CD14-positive monocyte (primary cell): ENCODE measurements at regions of chr2 and their contacts with region 1.

Region 1: GRCh38 chr2:54522624-54523281 is 66.6 kb downstream of the SPTBN1 start:
- DNase-seq: peak; percentile 43 to 74 (median 66)
- H3K4me3 ChIP-seq: no peak overlapping the region
- H3K4me3 Mint-ChIP-seq: peak overlapping the region in 1 of 2 donors; percentile 39
- H3K27ac ChIP-seq: no peak overlapping the region
- H3K27ac Mint-ChIP-seq: no peak overlapping the region
- H3K4me1 ChIP-seq: peaks cover 6 to 7% of the 10 kb centered on the region in 2 donors
- H3K4me1 Mint-ChIP-seq: peaks cover 12% of the 10 kb centered on the region
- H3K27me3 ChIP-seq: no peaks in the 10 kb centered on the region
- H3K27me3 Mint-ChIP-seq: peaks cover 0 to 2% (median 0%) of the 10 kb centered on the region in 3 donors
- CTCF ChIP-seq: peak; percentile 76

Region 2: GRCh38 chr2:54479422-54479821 is 43.3 kb before region 1 on chr2:
- intact Hi-C with region 1: no loop called
- DNase-seq: no peak
- H3K4me3 ChIP-seq: no peak overlapping the region
- H3K4me3 Mint-ChIP-seq: no peak overlapping the region
- H3K27ac ChIP-seq: no peak overlapping the region
- H3K27ac Mint-ChIP-seq: no peak overlapping the region
- H3K4me1 ChIP-seq: no peaks in the 10 kb centered on the region
- H3K4me1 Mint-ChIP-seq: no peaks in the 10 kb centered on the region
- H3K27me3 ChIP-seq: no peaks in the 10 kb centered on the region
- H3K27me3 Mint-ChIP-seq: peaks cover 0 to 2% (median 1%) of the 10 kb centered on the region in 3 donors
- CTCF ChIP-seq: no peak

Region 3: DNA sequence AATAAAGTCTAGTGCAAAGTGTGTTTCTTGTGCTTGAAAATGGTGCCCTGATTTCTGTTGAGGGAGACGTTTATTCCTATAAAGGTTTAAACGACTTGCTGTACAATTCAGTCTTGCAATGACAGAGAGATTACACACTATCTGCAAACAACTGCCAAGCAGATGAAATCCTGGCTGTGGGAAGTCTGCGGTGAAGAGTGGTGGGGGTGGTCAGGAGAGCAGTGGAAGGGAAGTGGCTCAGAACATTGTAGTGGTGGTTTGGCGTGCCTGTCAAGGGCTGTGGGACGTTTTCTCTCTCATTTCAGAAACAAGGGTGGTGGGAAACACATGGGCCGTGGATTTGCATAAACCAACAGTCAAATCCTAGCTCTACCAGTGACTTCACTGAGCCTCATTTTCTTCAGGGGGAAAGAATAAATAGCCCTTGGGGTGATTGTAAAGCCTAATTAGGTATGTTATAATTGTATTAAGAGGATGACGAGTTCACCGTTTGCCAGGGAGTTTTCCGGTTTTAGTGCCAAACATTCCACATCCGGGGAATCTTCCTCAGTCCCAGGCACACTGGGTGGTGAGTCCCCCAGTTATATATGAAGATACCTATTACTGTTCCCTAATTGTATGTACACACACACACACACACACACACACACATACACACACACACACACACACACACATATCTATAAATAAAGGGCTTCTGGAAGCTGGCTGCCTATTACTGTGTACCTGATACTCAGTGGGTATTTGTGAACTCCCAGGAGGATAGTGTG is 48.4 kb after region 1 on chr2:
- intact Hi-C with region 1: loop called (anchors 5 to 10 kb)
- DNase-seq: peak; percentile 54 to 73 (median 54)
- H3K4me3 ChIP-seq: peak overlapping the region in 1 of 3 experiments; percentile 4
- H3K4me3 Mint-ChIP-seq: peak overlapping the region; percentile 47 to 68
- H3K27ac ChIP-seq: peak overlapping the region in 1 of 2 donors; percentile 39
- H3K27ac Mint-ChIP-seq: peak overlapping the region in 6 of 7 donors; percentile 52 to 90 (median 78)
- H3K4me1 ChIP-seq: peaks cover 58 to 73% of the 10 kb centered on the region in 2 donors
- H3K4me1 Mint-ChIP-seq: peaks cover 85% of the 10 kb centered on the region
- H3K27me3 ChIP-seq: no peaks in the 10 kb centered on the region
- H3K27me3 Mint-ChIP-seq: peaks cover 0 to 2% (median 0%) of the 10 kb centered on the region in 3 donors
- CTCF ChIP-seq: no peak

Region 4: DNA sequence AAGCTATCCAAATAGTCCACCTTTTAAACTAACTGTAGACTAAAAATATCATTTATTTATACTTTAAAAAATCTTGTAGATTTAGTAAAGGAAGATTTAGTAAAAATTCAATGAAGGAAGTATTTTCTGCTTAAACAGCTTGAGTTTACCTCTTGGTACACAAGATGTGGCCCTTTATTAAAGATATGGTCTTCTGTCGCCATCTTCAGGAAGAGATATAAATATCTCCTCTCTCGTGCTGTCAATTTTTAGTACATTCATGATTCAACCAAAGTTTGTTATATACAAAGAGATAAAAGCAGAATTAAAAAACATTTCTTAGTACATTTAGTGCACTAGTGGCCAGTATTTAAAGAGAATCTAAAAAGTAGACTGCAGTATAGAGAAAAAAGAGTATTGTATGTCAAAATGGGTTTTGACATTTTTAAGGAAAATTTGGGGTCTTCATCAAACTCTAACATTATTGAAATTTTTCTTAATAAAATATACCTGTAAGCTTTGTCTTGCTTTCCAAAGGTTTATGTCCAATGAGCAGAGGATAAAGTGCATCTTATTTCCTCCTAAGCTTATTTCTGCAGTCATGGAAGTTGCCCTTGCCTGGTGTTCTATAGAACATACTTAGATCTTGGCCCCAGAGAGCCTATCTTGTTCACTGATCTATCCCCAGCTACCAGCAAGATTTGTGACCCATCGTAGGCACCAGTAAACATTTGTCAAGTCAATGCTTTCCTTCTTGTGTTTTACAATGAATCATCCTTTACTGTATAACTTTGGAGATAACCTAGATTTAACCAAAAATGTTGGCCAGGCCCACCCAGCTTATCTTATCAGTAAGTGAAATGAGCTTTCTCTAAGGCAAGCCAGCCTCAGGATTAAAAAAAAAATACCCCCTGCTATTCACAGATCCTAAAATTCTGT is 182.2 kb after region 1 on chr2:
- intact Hi-C with region 1: loop called (anchors 2 to 5 kb)
- DNase-seq: peak; percentile 44 to 54 (median 54)
- H3K4me3 ChIP-seq: no peak overlapping the region
- H3K4me3 Mint-ChIP-seq: no peak overlapping the region
- H3K27ac ChIP-seq: no peak overlapping the region
- H3K27ac Mint-ChIP-seq: no peak overlapping the region
- H3K4me1 ChIP-seq: peaks cover 11 to 15% of the 10 kb centered on the region in 2 donors
- H3K4me1 Mint-ChIP-seq: peaks cover 15% of the 10 kb centered on the region
- H3K27me3 ChIP-seq: peaks cover 11 to 25% of the 10 kb centered on the region in 2 donors
- H3K27me3 Mint-ChIP-seq: peaks cover 26 to 28% (median 26%) of the 10 kb centered on the region in 3 donors
- CTCF ChIP-seq: peak; percentile 78

Region 5: GRCh38 chr2:54723131-54723995 is 200.6 kb after region 1 on chr2 and contains the start of gene EML6:
- intact Hi-C with region 1: loop called in 1 of 2 experiments (anchors 5 kb)
- DNase-seq: peak; percentile 98
- H3K4me3 ChIP-seq: peak within 1 kb of the TSS; percentile 55 to 83 (median 58)
- H3K4me3 Mint-ChIP-seq: peak within 1 kb of the TSS; percentile 95 to 96
- H3K27ac ChIP-seq: peak within 1 kb of the TSS in 1 of 2 donors; percentile 37
- H3K27ac Mint-ChIP-seq: peak within 1 kb of the TSS; percentile 22 to 87 (median 71)
- H3K4me1 ChIP-seq: peaks cover 20 to 27% of the 10 kb centered on the region in 2 donors
- H3K4me1 Mint-ChIP-seq: peaks cover 19% of the 10 kb centered on the region
- H3K27me3 ChIP-seq: peaks cover 32 to 49% of the 10 kb centered on the region in 2 donors
- H3K27me3 Mint-ChIP-seq: peaks cover 34 to 62% (median 42%) of the 10 kb centered on the region in 3 donors
- CTCF ChIP-seq: no peak
- polyA plus RNA-seq, gene EML6: 0.79 TPM in 1 of 3 donors, not detected in the others

Region 6: GRCh38 chr2:55159037-55159651 is 636.4 kb after region 1 on chr2:
- intact Hi-C with region 1: no loop called
- DNase-seq: peak in 1 of 3 donors; percentile 16
- H3K4me3 ChIP-seq: no peak overlapping the region
- H3K4me3 Mint-ChIP-seq: no peak overlapping the region
- H3K27ac ChIP-seq: peak overlapping the region; percentile 20 to 54
- H3K27ac Mint-ChIP-seq: peak overlapping the region in 6 of 7 donors; percentile 42 to 68 (median 56)
- H3K4me1 ChIP-seq: peaks cover 60 to 66% of the 10 kb centered on the region in 2 donors
- H3K4me1 Mint-ChIP-seq: peaks cover 70% of the 10 kb centered on the region
- H3K27me3 ChIP-seq: no peaks in the 10 kb centered on the region
- H3K27me3 Mint-ChIP-seq: peaks cover 0 to 5% (median 0%) of the 10 kb centered on the region in 3 donors
- CTCF ChIP-seq: no peak